ENCODE measurements at regions of chr18 and their contacts with region 1.

Region 1: GRCh38 chr18:49510393-49511115 is 23.5 kb upstream of the C18orf32 start:
- DNase-seq: peak; percentile 48 to 60 (median 48)
- ATAC-seq: peak; percentile 78
- H3K4me3 ChIP-seq: no peak overlapping the region
- H3K27ac ChIP-seq: no peak overlapping the region
- H3K4me1 ChIP-seq: no peaks in the 10 kb centered on the region
- H3K27me3 ChIP-seq: no peaks in the 10 kb centered on the region
- CTCF ChIP-seq: peak; percentile 72 to 81 (median 76)
- POLR2A ChIP-seq: no peak

Region 2: DNA sequence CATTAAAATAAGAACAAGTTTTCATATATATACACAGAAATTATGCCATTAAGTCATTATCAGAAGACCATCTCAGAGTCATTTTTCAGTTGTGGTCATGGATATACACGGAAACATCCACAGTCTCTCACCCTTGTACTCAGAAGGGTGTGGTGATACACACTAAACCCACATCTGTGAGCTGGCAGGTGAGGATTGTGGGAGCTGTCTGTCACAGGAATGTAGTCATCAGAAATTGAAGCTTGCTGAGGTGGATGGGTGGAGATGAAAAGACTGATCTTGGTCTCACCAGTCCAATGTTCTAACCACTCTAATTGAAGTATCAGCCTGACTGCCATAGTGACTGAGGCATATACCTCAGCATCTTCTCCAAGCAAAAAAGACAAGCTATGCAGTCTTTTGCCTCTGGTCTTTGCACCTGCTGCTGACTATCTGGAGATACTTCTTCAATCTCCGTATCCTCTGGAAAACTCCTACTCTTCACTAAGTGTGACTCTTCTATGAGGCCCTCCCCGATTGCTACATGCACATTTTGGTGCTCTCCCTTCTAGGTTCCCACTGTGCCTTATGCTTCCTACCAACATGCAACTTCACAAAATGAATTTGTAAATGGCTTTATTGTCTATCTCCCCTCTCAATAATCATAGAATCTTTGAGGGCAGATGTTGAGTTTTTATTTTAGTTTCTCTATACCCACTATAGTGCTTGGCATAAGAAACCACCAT is 283.0 kb before region 1 on chr18:
- intact Hi-C with region 1: no loop called
- DNase-seq: no peak
- ATAC-seq: no peak
- H3K4me3 ChIP-seq: no peak overlapping the region
- H3K27ac ChIP-seq: no peak overlapping the region
- H3K4me1 ChIP-seq: no peaks in the 10 kb centered on the region
- H3K27me3 ChIP-seq: no peaks in the 10 kb centered on the region
- CTCF ChIP-seq: no peak
- POLR2A ChIP-seq: no peak

Region 3: GRCh38 chr18:49814147-49814499 is 303.6 kb after region 1 on chr18:
- intact Hi-C with region 1: no loop called
- DNase-seq: peak; percentile 64 to 70 (median 68)
- ATAC-seq: peak; percentile 64
- H3K4me3 ChIP-seq: peak overlapping the region; percentile 37 to 79
- H3K27ac ChIP-seq: peak overlapping the region; percentile 86 to 94 (median 92)
- H3K4me1 ChIP-seq: peaks cover 28% of the 10 kb centered on the region
- H3K27me3 ChIP-seq: no peaks in the 10 kb centered on the region
- CTCF ChIP-seq: no peak
- POLR2A ChIP-seq: peak in 2 of 3 donors; percentile 63 to 69

Region 4: DNA sequence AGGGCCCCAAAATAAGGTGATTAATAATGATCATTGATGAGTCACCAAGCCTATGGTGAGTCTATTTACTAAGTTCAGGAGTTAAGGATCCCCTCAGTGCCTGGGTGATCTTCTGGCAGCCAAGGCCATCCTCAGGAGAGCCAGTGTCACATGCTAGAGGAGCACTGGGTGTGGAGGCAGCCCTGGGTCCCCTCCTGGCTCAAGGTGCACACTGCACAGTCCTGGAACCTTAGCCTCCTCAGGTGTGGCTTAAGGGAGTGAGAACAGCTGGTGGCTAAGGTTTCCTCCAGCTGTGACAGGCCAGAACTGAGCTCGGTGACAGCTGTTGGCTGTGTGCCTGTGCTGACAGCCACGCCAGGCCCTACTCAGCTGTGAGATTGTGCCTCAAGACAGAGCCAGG is 354.8 kb after region 1 on chr18:
- intact Hi-C with region 1: loop called (anchors 5 kb)
- DNase-seq: peak; percentile 85 to 95 (median 90)
- ATAC-seq: peak; percentile 95
- H3K4me3 ChIP-seq: no peak overlapping the region
- H3K27ac ChIP-seq: peak overlapping the region in 1 of 4 donors; percentile 25
- H3K4me1 ChIP-seq: peaks cover 6% of the 10 kb centered on the region
- H3K27me3 ChIP-seq: no peaks in the 10 kb centered on the region
- CTCF ChIP-seq: peak in 4 of 7 experiments; percentile 28 to 49 (median 30)
- POLR2A ChIP-seq: no peak